ENCODE measurements at regions of chr14 and their contacts with region 1.

Region 1: DNA sequence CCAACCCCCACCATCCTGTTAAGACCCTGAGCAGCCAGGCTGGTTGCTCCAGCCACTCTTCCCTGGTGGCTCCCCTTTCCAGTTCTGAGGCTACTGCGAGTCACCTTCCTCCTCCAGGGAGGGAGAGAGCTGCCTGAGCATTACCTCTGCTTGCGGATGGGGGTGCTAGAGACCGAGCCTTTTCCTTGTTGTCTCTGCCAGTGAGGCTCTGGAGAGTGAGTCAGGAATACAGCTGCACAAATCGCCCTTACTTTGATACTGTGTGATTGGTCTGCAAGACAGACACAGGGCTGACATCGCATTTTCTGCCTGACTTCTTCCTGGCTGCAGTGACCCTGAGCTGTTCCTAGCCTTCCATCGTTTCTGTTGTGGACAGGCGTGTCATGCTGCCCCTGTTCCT is 94.3 kb downstream of the SLC25A47 start:
- DNase-seq: peak; percentile 93
- H3K4me3 ChIP-seq: no peak overlapping the region
- H3K27ac ChIP-seq: peak overlapping the region; percentile 28
- H3K27me3 ChIP-seq: no peaks in the 10 kb centered on the region
- CTCF ChIP-seq: peak; percentile 97

Region 2: DNA sequence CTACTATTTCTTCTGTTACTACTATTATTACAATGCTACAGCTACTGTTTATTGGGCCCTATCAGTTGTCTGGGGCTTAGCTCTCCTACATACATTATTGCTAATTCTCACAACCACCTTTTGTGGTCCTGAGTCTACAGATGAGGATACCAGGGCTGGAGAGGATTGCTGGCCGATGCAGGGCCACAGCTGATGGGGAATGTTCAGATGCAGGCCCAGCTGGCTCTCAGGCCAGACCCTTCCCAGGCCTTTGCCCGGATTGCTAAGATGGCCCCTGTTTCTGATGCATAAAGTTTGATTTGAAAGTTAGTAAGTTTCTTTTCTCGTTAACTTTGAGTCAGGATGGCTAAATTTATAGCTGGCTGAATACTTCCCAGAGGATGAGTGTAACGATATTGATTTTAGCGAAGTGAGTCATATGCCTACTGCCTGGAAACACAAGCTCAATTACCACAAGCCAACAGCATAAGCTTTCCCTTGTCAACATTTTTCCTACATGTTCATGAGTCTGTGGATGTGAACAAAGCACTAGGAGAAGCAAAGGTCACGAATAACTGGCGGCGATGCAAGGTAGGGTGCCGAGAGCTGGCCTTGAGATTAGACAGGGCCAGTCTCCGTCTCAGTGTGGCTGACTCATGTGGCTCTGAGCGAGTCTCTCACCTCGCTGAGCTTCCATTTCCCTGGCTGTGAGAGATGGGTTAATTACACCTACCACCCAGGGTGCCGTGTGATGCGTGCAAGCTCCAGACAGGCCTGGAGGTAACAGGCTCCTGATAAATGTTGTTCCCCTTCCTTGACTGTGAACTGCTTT is 58.8 kb after region 1 on chr14:
- in situ Hi-C with region 1: no loop called
- DNase-seq: peak; percentile 94
- H3K4me3 ChIP-seq: no peak overlapping the region
- H3K27ac ChIP-seq: peak overlapping the region; percentile 84
- H3K27me3 ChIP-seq: no peaks in the 10 kb centered on the region
- CTCF ChIP-seq: no peak

Region 3: GRCh38 chr14:100662879-100663760 is 245.7 kb after region 1 on chr14:
- in situ Hi-C with region 1: loop called (anchors 25 kb)
- DNase-seq: peak; percentile 54
- H3K4me3 ChIP-seq: no peak overlapping the region
- H3K27ac ChIP-seq: no peak overlapping the region
- H3K27me3 ChIP-seq: no peaks in the 10 kb centered on the region
- CTCF ChIP-seq: peak; percentile 94

Region 4: DNA sequence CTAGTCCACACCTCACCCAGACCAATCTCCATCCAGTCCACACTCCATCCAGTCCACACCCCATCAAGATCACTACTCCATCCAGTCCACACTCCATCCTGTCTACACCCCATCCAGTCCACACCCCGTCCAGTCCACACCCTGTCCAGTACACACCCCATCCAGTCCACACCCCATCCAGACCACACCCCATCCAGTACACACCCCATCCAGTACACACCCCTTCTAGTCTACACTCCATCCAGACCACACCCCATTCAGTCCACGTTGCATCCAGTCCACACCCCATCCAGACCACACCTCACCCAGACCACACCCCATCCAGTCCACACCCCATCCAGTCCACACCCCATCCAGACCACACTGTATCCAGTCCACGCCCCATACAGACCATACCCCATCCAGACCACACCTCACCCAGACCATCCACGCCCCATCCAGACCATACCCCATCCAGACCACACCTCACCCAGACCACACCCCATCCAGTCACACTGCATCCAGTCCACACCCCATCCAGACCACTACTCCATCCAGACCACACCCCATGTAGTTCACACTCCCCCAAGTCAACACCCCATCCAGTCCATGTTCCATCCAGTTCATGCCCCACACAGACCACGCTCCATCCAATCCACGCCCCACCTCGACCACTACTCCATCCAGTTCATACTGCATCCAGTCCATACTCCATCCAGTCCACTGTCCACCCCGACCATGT is 602.7 kb after region 1 on chr14:
- in situ Hi-C with region 1: no loop called
- DNase-seq: no peak
- H3K4me3 ChIP-seq: no peak overlapping the region
- H3K27ac ChIP-seq: no peak overlapping the region
- H3K27me3 ChIP-seq: no peaks in the 10 kb centered on the region
- CTCF ChIP-seq: no peak

Measured in brain microvascular endothelial cell (primary cell).